GM12878 (cell line): ENCODE measurements at regions of chr2 and their contacts with region 1.

Region 1: GRCh38 chr2:183359867-183360266 is 235.6 kb downstream of the NUP35 start:
- DNase-seq: no peak
- ATAC-seq: no peak
- H3K4me3 ChIP-seq: no peak overlapping the region
- H3K27ac ChIP-seq: no peak overlapping the region
- H3K4me1 ChIP-seq: no peaks in the 10 kb centered on the region
- H3K27me3 ChIP-seq: no peaks in the 10 kb centered on the region
- CTCF ChIP-seq: no peak; a peak in 1 of 6 replicates
- EP300 ChIP-seq: no peak
- POLR2A ChIP-seq: no peak
- RAD21 ChIP-seq: no peak

Region 2: GRCh38 chr2:183248866-183249567 is 110.8 kb before region 1 on chr2:
- CTCF ChIA-PET with region 1: interaction called, 16 read pairs
- POLR2A ChIA-PET with region 1: no interaction called
- RAD21 ChIA-PET with region 1: interaction called, 10 read pairs
- SMC1A ChIA-PET with region 1: interaction called, 4 read pairs
- in situ Hi-C with region 1: no loop called
- intact Hi-C with region 1: no loop called
- DNase-seq: no peak
- ATAC-seq: peak; percentile 73
- H3K4me3 ChIP-seq: no peak overlapping the region
- H3K27ac ChIP-seq: no peak overlapping the region
- H3K4me1 ChIP-seq: no peaks in the 10 kb centered on the region
- H3K27me3 ChIP-seq: no peaks in the 10 kb centered on the region
- CTCF ChIP-seq: peak; percentile 33 to 56 (median 37); a peak in 4 of 6 replicates
- EP300 ChIP-seq: no peak
- POLR2A ChIP-seq: no peak
- RAD21 ChIP-seq: peak; percentile 62

Region 3: DNA sequence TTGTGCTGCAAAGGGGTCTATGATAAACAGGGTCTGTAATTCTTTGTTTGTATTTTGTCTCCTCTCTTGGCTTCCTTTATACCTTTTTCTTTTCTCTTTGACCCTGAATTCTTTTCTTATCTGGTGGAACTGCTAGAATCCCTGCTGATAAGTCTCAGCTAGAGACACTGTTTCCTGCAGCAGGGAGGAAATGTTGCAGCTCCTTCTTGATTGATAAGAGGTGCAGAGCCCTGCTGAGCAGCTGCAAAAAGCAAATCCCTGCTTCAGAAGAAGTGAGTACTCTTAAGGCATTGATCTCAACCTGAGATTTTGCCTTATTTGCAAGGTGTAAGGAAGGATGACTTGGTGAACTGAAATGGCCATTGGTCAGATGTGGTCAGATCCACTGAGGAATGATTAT is 67.8 kb before region 1 on chr2:
- CTCF ChIA-PET with region 1: interaction called, 10 read pairs
- POLR2A ChIA-PET with region 1: no interaction called
- RAD21 ChIA-PET with region 1: no interaction called
- SMC1A ChIA-PET with region 1: no interaction called
- in situ Hi-C with region 1: no loop called
- intact Hi-C with region 1: loop called (anchors 2 kb)
- DNase-seq: no peak
- ATAC-seq: no peak
- H3K4me3 ChIP-seq: no peak overlapping the region
- H3K27ac ChIP-seq: no peak overlapping the region
- H3K4me1 ChIP-seq: no peaks in the 10 kb centered on the region
- H3K27me3 ChIP-seq: no peaks in the 10 kb centered on the region
- CTCF ChIP-seq: no peak
- EP300 ChIP-seq: no peak
- POLR2A ChIP-seq: no peak
- RAD21 ChIP-seq: no peak

Region 4: GRCh38 chr2:183348492-183348891 is 11.4 kb before region 1 on chr2:
- CTCF ChIA-PET with region 1: interaction called, 16 read pairs
- POLR2A ChIA-PET with region 1: interaction called, 3 read pairs
- RAD21 ChIA-PET with region 1: interaction called, 3 read pairs
- SMC1A ChIA-PET with region 1: interaction called, 18 read pairs
- in situ Hi-C with region 1: no loop called
- intact Hi-C with region 1: no loop called
- DNase-seq: peak; percentile 38
- ATAC-seq: peak; percentile 89
- H3K4me3 ChIP-seq: no peak overlapping the region
- H3K27ac ChIP-seq: no peak overlapping the region
- H3K4me1 ChIP-seq: peaks cover 4% of the 10 kb centered on the region; the same call in 1 of the 2 replicates
- H3K27me3 ChIP-seq: no peaks in the 10 kb centered on the region
- CTCF ChIP-seq: peak in 1 of 3 experiments; percentile 19; a peak in 1 of 6 replicates
- EP300 ChIP-seq: no peak
- POLR2A ChIP-seq: no peak
- RAD21 ChIP-seq: 0 out of 2 replicates have a peak, but pooled peaks have one; percentile 20